K562 (cell line): ENCODE measurements at regions of chr6 and their contacts with region 1.

Region 1: DNA sequence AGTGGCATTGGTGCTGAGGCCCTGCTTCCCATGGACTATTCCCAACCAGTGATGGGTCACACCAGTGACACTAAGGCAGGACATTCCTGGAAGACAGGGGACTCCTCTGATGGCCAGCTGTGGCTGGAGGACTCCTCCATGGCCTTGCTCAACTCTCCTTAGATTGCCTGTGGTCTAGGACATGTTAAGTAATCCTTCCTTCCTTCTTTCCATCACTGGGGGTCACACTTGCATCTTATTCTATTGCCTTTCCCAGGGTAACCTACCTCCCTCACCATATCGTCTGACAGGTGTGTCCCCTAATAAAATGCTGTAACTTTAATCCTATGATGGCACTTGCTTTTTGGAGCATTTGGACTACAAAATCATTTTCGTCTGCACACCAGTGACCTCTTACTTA is 24.5 kb upstream of the HLA-A start:
- DNase-seq: peak in 2 of 4 experiments; percentile 33 to 41
- ATAC-seq: peak; percentile 86
- H3K4me3 ChIP-seq: no peak overlapping the region
- H3K27ac ChIP-seq: no peak overlapping the region
- H3K4me1 ChIP-seq: no peaks in the 10 kb centered on the region
- H3K27me3 ChIP-seq: peaks cover 3 to 4% of the 10 kb centered on the region in 2 experiments; a peak in 3 of 5 replicates
- CTCF ChIP-seq: peak in 2 of 3 experiments; percentile 36 to 51; a peak in 2 of 6 replicates
- EP300 ChIP-seq: no peak
- POLR2A ChIP-seq: no peak
- RAD21 ChIP-seq: peak; percentile 29 to 75; a peak in 2 of 4 replicates

Region 2: DNA sequence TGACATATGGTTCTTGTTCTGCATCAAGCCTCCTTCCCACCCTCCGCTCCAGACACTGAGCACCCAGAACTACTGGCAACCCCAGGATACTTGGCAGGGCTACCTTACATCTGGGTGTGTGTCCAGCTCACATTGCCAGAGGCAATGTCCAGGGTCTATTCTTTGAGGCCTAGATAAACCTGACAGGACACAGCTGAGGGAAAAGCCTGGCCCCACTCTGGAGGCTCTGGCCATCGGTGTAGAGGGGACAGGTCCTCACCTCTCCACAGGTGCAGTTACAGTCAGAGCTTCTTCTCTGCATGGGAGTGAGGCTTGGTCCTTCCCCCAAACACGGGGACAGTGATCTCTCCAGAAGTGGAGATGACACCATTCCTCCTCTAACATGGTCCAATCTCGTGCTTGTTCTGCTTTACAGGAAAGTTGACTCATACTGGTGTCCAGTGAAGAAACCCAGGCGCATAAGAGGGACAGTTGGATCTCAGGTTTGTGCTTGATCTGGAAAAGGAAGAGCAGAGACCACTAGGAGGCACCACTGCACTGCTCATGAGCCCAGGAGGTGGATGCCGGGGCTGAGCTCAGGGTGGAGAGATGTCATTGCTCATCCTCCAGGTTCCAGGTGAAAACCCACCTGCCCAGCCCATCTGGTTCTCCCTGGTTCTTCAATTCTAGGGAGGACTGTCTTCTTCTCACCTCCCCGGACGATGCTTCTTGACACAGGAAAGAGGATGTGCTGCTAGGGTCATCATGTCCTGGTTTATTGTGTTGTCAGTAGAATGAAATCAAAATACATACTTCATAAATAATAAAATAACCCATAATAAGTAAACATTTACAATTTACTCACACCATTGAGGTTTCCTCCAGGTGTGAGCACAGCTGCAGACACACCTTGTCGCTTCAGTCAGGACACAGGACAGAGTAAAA is 179.9 kb before region 1 on chr6:
- CTCF ChIA-PET with region 1: no interaction called
- POLR2A ChIA-PET with region 1: no interaction called
- in situ Hi-C with region 1: no loop called
- intact Hi-C with region 1: no loop called
- DNase-seq: peak; percentile 52 to 78 (median 60)
- ATAC-seq: peak; percentile 96
- H3K4me3 ChIP-seq: no peak overlapping the region
- H3K27ac ChIP-seq: no peak overlapping the region
- H3K4me1 ChIP-seq: no peaks in the 10 kb centered on the region
- H3K27me3 ChIP-seq: 0 out of 5 replicates have a peak, but pooled peaks cover 0 to 4% of the 10 kb centered on the region in 2 experiments
- CTCF ChIP-seq: peak; percentile 84 to 86 (median 85)
- EP300 ChIP-seq: no peak
- POLR2A ChIP-seq: no peak
- RAD21 ChIP-seq: peak; percentile 41 to 90

Region 3: DNA sequence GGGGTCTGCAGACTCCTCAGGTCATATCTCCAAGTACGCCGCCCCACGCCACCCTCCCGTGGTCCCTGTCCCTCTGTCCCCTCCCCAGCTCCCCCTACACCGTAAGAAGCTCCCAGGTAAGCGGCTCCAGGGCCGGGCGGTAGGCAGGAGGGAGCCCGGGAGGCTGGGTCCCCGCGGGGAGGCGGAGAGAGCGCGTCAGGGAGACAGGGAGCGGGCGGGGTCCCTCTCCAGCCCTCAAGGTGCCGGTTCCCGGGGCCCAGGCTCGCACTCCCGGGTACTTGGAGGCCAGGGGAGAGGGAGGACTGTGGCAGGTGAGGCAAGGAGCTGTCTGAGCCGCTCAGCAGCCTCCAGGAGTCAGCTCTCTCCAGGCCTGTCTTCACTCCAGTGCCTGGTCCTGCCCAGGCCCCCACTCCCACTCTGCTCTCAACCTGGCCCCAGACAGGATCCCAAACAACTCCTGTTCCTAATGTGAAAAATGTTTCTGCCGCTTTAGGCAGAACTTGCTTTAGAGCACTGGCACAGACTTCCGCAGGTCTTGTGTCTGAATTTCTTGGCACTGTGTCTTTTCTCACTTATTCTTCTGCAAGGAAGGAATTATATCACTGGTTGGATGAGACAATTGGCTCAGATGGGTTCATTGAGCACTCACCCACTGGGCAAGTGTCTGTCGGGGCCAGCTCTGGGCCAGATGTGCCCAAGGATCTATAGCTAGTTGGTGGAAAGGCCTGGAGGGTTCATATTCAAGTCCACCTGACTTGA is 53.6 kb before region 1 on chr6:
- CTCF ChIA-PET with region 1: no interaction called
- POLR2A ChIA-PET with region 1: no interaction called
- in situ Hi-C with region 1: no loop called
- intact Hi-C with region 1: no loop called
- DNase-seq: no peak
- ATAC-seq: no peak; the same call in 2 of the 3 replicates
- H3K4me3 ChIP-seq: no peak overlapping the region
- H3K27ac ChIP-seq: no peak overlapping the region
- H3K4me1 ChIP-seq: no peaks in the 10 kb centered on the region
- H3K27me3 ChIP-seq: peaks cover 21 to 63% of the 10 kb centered on the region in 2 experiments
- CTCF ChIP-seq: no peak
- EP300 ChIP-seq: no peak
- POLR2A ChIP-seq: no peak
- RAD21 ChIP-seq: no peak

Region 4: GRCh38 chr6:30006170-30007131 is 88.6 kb after region 1 on chr6:
- CTCF ChIA-PET with region 1: no interaction called
- POLR2A ChIA-PET with region 1: no interaction called
- in situ Hi-C with region 1: loop called (anchors 5 kb)
- intact Hi-C with region 1: no loop called
- DNase-seq: no peak
- ATAC-seq: no peak
- H3K4me3 ChIP-seq: no peak overlapping the region
- H3K27ac ChIP-seq: no peak overlapping the region
- H3K4me1 ChIP-seq: peaks cover 0 to 10% of the 10 kb centered on the region in 2 experiments; a peak in 1 of 5 replicates
- H3K27me3 ChIP-seq: no peaks in the 10 kb centered on the region
- CTCF ChIP-seq: no peak
- EP300 ChIP-seq: no peak
- POLR2A ChIP-seq: no peak
- RAD21 ChIP-seq: no peak

Region 5: DNA sequence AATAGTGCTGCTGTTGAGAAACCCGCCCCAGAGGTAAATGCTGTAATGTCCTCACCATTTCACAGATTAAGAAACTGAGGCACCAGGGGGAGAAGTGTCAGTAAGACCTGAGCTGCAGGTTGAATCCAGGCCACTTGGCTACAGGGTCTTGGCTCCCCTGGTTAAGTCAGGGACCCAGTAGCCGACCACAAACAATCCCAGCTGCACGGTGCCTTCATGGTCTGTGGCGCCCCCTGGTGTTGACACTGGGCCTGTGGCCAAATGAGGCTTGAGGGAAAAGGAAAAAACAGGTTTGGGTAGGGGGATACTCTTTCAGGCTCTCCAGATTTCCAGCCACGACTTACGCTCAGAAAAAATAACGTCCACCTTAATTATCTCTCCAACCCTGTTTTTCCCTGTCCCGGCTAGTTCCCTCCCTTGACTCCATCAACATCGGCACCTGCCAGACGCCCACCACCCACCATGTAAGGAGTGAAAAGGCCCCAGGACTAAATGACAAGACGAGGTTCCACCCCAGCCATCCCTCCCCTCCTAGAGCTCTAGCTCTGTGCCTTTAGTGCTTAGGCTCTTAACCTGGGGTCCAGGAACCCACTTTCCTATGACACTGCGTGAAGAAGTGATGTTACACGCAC is 95.5 kb after region 1 on chr6:
- CTCF ChIA-PET with region 1: interaction called, 12 read pairs
- POLR2A ChIA-PET with region 1: no interaction called
- in situ Hi-C with region 1: no loop called
- intact Hi-C with region 1: loop called (anchors 1 kb)
- DNase-seq: peak; percentile 32 to 64 (median 52)
- ATAC-seq: peak; percentile 89
- H3K4me3 ChIP-seq: no peak overlapping the region
- H3K27ac ChIP-seq: no peak overlapping the region
- H3K4me1 ChIP-seq: no peaks in the 10 kb centered on the region
- H3K27me3 ChIP-seq: no peaks in the 10 kb centered on the region
- CTCF ChIP-seq: peak; percentile 78 to 89 (median 83)
- EP300 ChIP-seq: no peak
- POLR2A ChIP-seq: no peak
- RAD21 ChIP-seq: peak; percentile 46 to 54